AG04449 (cell line): ENCODE measurements at regions of chr9 and their contacts with region 1.

Region 1: DNA sequence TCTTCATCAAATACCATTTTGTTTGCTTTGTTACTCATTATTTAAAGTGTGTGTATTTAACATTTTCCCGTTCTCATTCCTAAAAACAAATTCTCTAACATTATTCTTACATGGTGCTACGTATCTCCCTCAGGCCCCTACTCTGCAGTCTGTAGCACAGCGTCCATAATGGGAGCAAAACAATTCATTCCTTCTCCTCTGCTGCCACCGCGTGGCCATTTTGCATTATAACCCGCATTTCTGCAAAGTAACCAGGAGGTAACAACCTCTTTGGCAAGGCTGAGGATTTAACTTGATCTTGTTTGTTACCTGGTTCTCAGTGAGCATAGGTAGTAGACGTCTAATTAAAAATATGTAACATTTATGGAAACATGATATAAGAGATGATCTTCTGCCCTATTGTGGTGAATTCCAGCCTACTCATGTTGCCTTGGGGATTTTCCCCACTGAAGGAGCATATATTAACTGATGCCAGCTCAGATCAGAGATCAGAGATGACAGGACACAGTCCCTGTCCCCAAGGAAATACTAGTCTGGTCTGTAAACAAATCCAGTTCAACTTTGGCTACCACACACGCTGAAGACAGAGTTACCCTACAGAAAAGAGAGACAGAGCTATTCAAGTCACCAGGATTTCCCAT is 10.5 kb downstream of the OR1K1 start:
- DNase-seq: no peak
- H3K4me3 ChIP-seq: no peak overlapping the region
- CTCF ChIP-seq: peak; percentile 65

Region 2: GRCh38 chr9:122453677-122454135 is 356.7 kb before region 1 on chr9:
- CTCF ChIA-PET with region 1: interaction called, 242 read pairs
- POLR2A ChIA-PET with region 1: no interaction called
- DNase-seq: no peak
- H3K4me3 ChIP-seq: no peak overlapping the region
- CTCF ChIP-seq: no peak

Region 3: DNA sequence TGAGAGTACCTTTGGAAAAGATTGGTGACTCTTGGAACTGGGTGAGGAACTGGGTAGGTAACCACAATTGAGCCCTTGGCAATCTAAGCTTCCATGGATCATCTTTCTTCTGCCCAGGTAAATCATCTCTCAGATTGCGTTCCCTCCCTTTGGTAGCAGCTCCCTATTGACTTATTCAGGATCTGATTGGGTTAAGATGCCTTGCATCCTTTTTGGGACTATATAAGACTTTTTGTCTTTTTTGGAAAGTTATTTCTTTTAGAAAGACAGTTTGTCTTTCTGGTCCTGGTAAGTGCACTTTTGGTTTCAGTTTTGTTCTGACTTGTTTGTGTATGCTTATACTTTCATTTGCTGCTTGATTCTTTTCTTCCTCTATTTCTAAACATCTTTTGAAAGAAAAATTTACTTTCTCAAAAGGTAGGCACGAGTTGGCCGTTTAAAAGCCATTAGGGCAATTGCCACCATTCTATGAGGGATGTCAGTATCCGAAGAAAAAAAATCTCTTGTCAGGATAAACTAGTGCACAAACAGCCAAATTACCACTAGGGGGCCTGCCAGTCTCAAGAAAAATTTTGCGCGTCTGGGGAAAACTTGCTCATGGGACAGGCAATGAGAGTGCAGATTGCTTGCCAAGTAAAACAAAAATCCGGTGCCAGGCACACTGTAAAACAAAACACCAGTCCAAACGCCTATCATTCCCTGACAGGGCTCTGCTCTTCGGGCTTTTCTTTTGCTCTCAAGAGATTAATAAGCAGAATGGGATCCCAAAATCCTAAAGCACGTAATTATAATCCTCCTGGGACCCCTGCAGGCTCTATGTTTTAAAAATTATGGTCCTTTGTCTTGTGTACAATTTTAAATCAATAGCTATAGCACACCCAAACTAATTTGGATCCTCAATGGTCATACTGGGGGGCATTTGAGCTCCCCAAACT is 345.5 kb before region 1 on chr9:
- CTCF ChIA-PET with region 1: interaction called, 242 read pairs
- POLR2A ChIA-PET with region 1: no interaction called
- DNase-seq: peak; percentile 64
- H3K4me3 ChIP-seq: peak overlapping the region; percentile 47
- CTCF ChIP-seq: peak; percentile 66

Region 4: DNA sequence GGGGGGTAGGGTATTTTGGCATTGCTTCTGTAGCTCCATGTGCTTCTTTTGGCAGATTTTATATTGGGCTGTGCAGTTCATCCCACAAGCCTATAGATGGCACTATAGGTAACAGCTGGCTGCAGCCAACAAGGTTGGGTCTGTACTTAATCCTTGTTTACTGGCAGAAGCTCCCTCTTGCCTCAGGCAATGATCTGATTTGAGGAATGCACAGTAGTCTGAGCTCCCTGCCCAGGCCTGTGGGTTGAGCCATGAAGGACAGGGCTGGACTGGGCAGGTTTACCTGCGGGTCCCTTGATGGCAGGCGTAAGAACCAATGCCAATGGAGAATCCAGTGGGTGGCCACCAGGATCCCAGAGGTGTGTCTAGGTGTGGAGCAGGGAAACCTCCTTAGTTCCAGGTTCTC is 311.5 kb before region 1 on chr9:
- CTCF ChIA-PET with region 1: interaction called, 11 read pairs
- POLR2A ChIA-PET with region 1: no interaction called
- DNase-seq: no peak
- H3K4me3 ChIP-seq: no peak overlapping the region
- CTCF ChIP-seq: peak; percentile 63